ENCODE measurements at regions of chr3 and their contacts with region 1.

Region 1: GRCh38 chr3:194333212-194333980 is 17.7 kb downstream of the CPN2 start:
- DNase-seq: peak; percentile 80 to 95 (median 87)
- ATAC-seq: peak; percentile 97
- H3K4me3 ChIP-seq: peak overlapping the region; percentile 33 to 47
- H3K4me3 Mint-ChIP-seq: peak overlapping the region; percentile 67
- H3K27ac ChIP-seq: no peak overlapping the region
- H3K27ac Mint-ChIP-seq: no peak overlapping the region
- H3K4me1 ChIP-seq: no peaks in the 10 kb centered on the region
- H3K4me1 Mint-ChIP-seq: peaks cover 8% of the 10 kb centered on the region
- H3K27me3 ChIP-seq: peaks cover 4 to 6% of the 10 kb centered on the region in 2 experiments
- H3K27me3 Mint-ChIP-seq: peaks cover 24% of the 10 kb centered on the region
- CTCF ChIP-seq: peak; percentile 99

Region 2: GRCh38 chr3:192566706-192567290 is 1766.6 kb before region 1 on chr3:
- CTCF ChIA-PET with region 1: no interaction called
- POLR2A ChIA-PET with region 1: no interaction called
- intact Hi-C with region 1: loop called in 1 of 2 experiments (anchors 10 kb)
- DNase-seq: peak in 8 of 9 experiments; percentile 9 to 55 (median 42)
- ATAC-seq: no peak
- H3K4me3 ChIP-seq: no peak overlapping the region
- H3K4me3 Mint-ChIP-seq: no peak overlapping the region
- H3K27ac ChIP-seq: no peak overlapping the region
- H3K27ac Mint-ChIP-seq: no peak overlapping the region
- H3K4me1 ChIP-seq: no peaks in the 10 kb centered on the region
- H3K4me1 Mint-ChIP-seq: peaks cover 2% of the 10 kb centered on the region
- H3K27me3 ChIP-seq: no peaks in the 10 kb centered on the region
- H3K27me3 Mint-ChIP-seq: peaks cover 2% of the 10 kb centered on the region
- CTCF ChIP-seq: peak; percentile 37

Region 3: DNA sequence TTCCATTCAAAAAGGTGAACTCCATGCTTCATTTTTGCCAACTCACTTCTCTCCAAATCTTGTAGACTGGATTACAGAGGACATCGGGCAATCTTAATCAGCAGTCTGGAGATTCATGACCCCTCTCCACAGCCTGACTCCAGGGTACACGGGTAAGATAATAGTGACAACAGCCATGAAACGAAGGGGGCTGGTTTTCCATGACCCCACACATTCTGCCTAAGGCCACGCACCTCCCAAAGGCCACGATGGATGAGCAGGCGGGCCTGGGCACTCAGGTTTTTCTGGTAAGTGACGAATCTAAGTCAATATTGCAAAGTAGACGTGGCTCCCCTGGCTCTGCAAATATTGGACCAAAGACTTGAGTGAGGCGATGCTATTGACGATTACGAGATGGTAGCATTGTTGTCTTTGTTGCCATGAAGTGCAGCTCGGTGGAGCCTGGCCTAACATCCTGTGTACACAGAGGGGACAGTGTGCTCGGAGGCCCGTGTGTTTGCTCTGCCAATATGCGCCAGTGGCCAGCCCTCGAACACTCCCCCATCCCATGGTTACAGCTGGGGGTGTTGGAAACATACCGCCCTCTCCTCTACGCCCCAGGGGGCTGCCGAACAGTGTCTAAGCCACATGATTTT is 621.3 kb before region 1 on chr3:
- CTCF ChIA-PET with region 1: no interaction called
- POLR2A ChIA-PET with region 1: no interaction called
- intact Hi-C with region 1: no loop called
- DNase-seq: no peak
- ATAC-seq: no peak
- H3K4me3 ChIP-seq: no peak overlapping the region
- H3K4me3 Mint-ChIP-seq: no peak overlapping the region
- H3K27ac ChIP-seq: no peak overlapping the region
- H3K27ac Mint-ChIP-seq: no peak overlapping the region
- H3K4me1 ChIP-seq: no peaks in the 10 kb centered on the region
- H3K4me1 Mint-ChIP-seq: peaks cover 11% of the 10 kb centered on the region
- H3K27me3 ChIP-seq: no peaks in the 10 kb centered on the region
- H3K27me3 Mint-ChIP-seq: no peaks in the 10 kb centered on the region
- CTCF ChIP-seq: no peak

Region 4: DNA sequence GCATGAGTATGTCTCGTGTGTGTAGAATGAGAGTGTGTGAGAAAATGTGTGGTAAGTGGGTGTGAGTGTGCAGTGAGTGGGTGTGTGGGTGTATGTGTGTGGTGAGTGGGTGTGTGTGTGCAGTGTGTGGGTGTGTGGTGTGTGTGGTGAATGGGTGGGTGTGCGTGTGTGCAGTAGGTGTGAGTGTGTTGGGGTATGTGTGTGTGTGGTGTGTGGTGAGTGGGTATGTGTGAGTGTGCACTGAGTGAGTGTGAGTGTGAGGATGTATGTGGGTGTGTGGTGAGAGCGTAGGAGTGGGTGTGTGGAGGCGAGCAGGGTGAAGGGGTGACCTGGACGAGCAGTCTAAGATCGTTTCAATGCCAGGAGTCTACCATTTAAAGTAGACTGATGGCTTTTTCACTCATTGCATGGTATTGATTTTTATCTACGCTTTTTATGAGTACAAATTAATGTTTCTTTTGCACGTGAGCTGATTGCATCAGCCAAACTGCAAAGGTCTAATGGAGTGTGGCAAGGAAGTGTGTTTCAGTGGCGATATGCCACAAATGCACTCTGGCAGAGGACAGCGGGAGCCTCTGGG is 19.4 kb after region 1 on chr3:
- CTCF ChIA-PET with region 1: interaction called, 82 read pairs
- POLR2A ChIA-PET with region 1: no interaction called
- intact Hi-C with region 1: no loop called
- DNase-seq: no peak
- ATAC-seq: no peak
- H3K4me3 ChIP-seq: no peak overlapping the region
- H3K4me3 Mint-ChIP-seq: no peak overlapping the region
- H3K27ac ChIP-seq: no peak overlapping the region
- H3K27ac Mint-ChIP-seq: no peak overlapping the region
- H3K4me1 ChIP-seq: no peaks in the 10 kb centered on the region
- H3K4me1 Mint-ChIP-seq: peaks cover 8% of the 10 kb centered on the region
- H3K27me3 ChIP-seq: no peaks in the 10 kb centered on the region
- H3K27me3 Mint-ChIP-seq: no peaks in the 10 kb centered on the region
- CTCF ChIP-seq: no peak

Region 5: DNA sequence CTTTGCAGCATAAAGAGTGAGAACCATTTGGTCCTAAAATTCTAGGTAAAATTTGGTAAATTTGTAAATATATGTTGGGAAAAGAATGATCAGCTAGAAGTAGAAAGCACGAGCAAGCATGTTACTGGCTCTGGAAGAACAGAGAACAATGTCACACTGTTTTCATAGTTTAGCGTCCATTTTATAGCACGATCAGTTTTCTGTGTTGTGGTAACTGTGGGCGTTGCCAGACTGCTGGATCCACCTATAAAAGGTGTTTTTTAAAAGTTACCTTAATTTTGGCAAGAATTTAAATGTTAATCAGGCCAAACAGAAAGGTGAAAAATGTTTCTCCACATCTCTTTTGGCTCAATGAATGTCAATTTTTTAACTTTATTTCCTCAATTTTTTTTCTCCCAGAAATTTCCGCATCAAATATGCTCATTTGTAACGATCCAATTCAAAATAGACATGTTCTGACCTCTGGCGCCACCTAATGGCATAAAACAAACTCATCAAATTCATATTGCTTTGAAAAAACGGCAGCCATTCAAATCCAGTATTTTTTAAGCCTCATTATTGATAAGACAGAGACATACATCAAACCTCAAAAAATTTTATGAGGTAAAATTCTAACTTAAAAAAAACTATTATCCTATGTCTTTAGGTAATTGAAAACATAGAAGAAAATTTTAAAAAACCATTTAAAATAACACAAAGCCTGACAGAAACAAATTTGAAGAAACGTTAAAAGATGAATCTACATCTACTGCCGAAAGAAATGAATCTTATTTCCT is 71.2 kb after region 1 on chr3:
- CTCF ChIA-PET with region 1: interaction called, 140 read pairs
- POLR2A ChIA-PET with region 1: interaction called, 3 read pairs
- intact Hi-C with region 1: loop called (anchors 1 kb)
- DNase-seq: peak in 4 of 9 experiments; percentile 37 to 75 (median 58)
- ATAC-seq: peak; percentile 66
- H3K4me3 ChIP-seq: no peak overlapping the region
- H3K4me3 Mint-ChIP-seq: no peak overlapping the region
- H3K27ac ChIP-seq: no peak overlapping the region
- H3K27ac Mint-ChIP-seq: no peak overlapping the region
- H3K4me1 ChIP-seq: peaks cover 7% of the 10 kb centered on the region
- H3K4me1 Mint-ChIP-seq: peaks cover 7% of the 10 kb centered on the region
- H3K27me3 ChIP-seq: no peaks in the 10 kb centered on the region
- H3K27me3 Mint-ChIP-seq: peaks cover 2% of the 10 kb centered on the region
- CTCF ChIP-seq: peak; percentile 88

Region 6: GRCh38 chr3:195259475-195260279 is 926.3 kb after region 1 on chr3:
- CTCF ChIA-PET with region 1: no interaction called
- POLR2A ChIA-PET with region 1: no interaction called
- intact Hi-C with region 1: loop called in 1 of 2 experiments (anchors 10 kb)
- DNase-seq: peak; percentile 82 to 95 (median 93)
- ATAC-seq: peak; percentile 91
- H3K4me3 ChIP-seq: peak overlapping the region; percentile 74 to 86
- H3K4me3 Mint-ChIP-seq: peak overlapping the region; percentile 72
- H3K27ac ChIP-seq: peak overlapping the region; percentile 60 to 86
- H3K27ac Mint-ChIP-seq: peak overlapping the region; percentile 87
- H3K4me1 ChIP-seq: peaks cover 32% of the 10 kb centered on the region
- H3K4me1 Mint-ChIP-seq: peaks cover 18% of the 10 kb centered on the region
- H3K27me3 ChIP-seq: no peaks in the 10 kb centered on the region
- H3K27me3 Mint-ChIP-seq: no peaks in the 10 kb centered on the region
- CTCF ChIP-seq: peak; percentile 71

Measured in CD8-positive, alpha-beta T cell (primary cell).